Endothelial cell of umbilical vein (primary cell): ENCODE measurements at regions of chr5 and their contacts with region 1.

Region 1: DNA sequence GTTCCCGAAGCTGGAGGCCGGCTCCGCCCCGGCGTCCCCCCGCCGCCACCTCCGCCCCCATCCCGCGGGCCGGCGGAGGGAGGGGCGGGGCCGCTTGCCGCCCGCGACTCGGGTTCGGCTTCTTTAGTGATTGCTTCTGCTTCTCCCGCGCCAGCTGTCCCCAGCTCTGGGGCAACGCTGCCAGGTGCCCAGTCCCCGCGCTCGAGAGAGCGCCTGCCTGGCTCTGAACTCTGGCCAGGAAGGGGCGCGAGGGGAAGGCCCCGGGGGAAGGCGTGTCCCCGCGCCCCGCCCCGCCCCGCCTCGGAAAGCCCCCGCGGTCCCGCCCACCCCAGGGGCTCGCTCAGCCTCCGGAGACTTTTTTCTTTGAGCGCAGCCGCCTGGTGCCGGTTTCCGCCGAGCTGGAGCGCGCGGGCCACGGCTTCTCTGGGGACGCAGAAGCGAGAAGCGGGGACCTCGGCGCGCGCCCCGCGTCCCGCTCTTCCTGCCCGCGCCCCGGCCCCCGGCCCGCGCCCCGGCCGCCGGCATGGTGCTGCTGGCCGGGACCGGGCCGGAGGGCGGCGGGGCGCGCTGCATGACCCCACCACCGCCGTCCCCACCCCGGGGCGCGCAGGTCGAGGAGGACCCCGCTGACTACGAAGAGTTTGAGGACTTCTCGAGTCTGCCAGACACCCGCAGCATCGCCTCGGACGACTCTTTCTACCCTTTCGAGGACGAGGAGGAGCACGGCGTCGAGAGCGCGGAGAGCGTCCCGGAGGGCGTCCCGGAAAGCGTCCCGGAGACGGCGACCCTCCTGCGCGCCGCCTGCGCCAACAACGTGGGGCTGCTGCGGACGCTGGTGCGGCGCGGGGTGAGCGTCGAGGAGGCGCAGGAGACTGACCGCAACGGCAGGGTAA is at the start of gene ANKRD33B:
- DNase-seq: peak; percentile 72
- H3K4me3 ChIP-seq: peak within 1 kb of the TSS; percentile 51 to 62 (median 51)
- H3K27ac ChIP-seq: peak within 1 kb of the TSS; percentile 79
- H3K4me1 ChIP-seq: peaks cover 18% of the 10 kb centered on the region
- H3K27me3 ChIP-seq: no peaks in the 10 kb centered on the region
- CTCF ChIP-seq: no peak
- POLR2A ChIP-seq: peak; percentile 70
- total RNA-seq, gene ANKRD33B: 4.4 and 5.4 TPM in 2 replicates

Region 2: DNA sequence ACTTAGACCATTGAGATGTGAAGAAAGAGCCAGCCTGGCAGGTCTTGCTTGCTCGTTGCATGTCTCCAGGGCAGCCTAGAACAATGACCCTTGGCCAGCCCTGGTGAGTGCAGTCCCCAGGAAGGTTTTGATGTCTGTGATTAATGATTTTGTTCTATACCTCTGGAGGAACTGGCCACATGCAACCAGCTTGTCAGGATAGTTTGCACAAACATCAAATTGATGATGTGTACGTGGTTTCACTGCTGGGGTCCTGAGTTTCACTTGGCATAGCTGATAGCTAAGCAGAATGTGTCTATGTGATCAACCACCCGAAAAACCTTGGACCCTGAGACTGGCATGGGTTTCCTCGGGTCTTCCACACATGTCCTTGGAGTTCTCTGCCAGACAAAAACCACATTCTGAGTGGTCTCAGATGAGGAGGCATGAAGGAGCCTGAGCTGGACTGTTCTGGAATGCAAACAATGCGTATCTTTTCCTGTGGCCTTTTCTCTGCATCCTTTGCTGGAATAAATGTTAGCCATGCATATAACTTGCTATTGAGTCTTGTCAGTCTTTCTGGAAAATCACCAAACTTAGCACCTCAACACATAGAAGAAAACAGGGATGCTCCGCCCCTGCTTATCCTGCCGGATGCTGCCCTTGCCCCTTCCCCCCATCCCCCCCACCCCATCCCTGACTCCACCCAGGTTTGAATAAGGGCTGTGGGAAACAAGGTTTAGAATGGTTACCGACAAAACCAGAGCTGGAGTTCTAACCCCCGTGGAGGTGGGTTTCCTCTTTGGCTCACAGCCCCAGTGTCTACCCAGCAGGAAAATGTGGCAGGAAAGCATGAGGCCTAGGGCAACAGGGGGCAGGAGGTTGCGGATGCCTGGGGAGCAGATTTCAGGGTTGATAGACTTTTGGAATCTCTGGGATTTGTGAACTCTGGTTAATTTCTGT is 50.4 kb before region 1 on chr5:
- CTCF ChIA-PET with region 1: no interaction called
- POLR2A ChIA-PET with region 1: no interaction called
- dilution Hi-C with region 1: no loop called
- intact Hi-C with region 1: loop called (anchors 1 kb)
- DNase-seq: peak; percentile 96
- H3K4me3 ChIP-seq: no peak overlapping the region
- H3K27ac ChIP-seq: peak overlapping the region; percentile 85
- H3K4me1 ChIP-seq: peaks cover 20% of the 10 kb centered on the region
- H3K27me3 ChIP-seq: no peaks in the 10 kb centered on the region
- CTCF ChIP-seq: no peak
- POLR2A ChIP-seq: peak; percentile 58

Region 3: GRCh38 chr5:10552183-10553143 is 11.7 kb before region 1 on chr5:
- CTCF ChIA-PET with region 1: interaction called, 8 read pairs
- POLR2A ChIA-PET with region 1: interaction called, 3 read pairs
- dilution Hi-C with region 1: no loop called
- intact Hi-C with region 1: loop called (anchors 1 kb)
- DNase-seq: peak; percentile 44
- H3K4me3 ChIP-seq: no peak overlapping the region
- H3K27ac ChIP-seq: peak overlapping the region; percentile 87
- H3K4me1 ChIP-seq: peaks cover 33% of the 10 kb centered on the region
- H3K27me3 ChIP-seq: no peaks in the 10 kb centered on the region
- CTCF ChIP-seq: no peak
- POLR2A ChIP-seq: no peak

Region 4: DNA sequence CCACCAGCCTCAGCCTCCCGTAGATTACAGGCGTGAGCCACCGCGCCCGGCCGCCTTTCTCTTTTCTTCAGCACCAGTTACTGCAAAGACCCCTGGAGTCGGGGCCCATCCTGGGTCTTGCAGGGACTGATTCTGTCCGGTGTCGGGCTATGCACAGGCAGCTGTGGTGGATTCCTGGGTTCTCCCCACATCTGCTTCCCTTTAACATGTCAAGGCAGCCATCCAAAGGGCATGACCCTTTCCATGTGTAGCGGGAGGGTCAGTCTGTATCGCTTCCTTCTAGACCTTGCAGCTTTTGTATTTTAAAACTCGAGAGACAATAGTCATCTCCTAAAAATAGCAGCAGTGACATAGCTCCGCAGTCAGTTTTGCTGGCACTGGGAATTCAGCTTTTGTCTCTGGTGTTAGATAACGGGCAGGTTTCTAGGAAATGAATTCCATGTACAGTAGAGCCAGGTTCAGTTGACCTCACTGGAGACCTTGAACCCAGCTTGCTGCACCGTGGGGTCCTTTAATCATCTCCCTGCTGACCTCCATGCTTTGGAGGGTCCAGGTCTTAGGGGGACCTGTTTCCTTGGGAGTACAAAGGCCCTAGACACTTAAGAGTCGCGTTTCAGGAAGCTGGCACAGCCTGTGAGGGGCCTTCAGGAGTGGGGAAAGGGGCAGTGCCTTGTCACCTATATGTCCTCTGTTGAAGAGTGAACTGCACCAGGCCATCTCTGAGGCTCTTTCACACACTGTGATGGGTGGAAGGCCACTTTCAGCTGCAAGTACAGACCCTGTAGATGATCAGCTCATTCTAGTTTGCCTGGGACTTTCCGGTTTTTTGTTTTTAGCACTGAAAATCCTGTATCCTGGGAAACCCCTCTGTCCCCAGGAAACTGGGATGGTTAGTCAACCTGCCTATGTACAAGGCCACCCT is 13.4 kb after region 1 on chr5:
- CTCF ChIA-PET with region 1: interaction called, 8 read pairs
- POLR2A ChIA-PET with region 1: interaction called, 3 read pairs
- dilution Hi-C with region 1: no loop called
- intact Hi-C with region 1: loop called (anchors 1 kb)
- DNase-seq: peak; percentile 86
- H3K4me3 ChIP-seq: no peak overlapping the region
- H3K27ac ChIP-seq: peak overlapping the region; percentile 32
- H3K4me1 ChIP-seq: peaks cover 12% of the 10 kb centered on the region
- H3K27me3 ChIP-seq: no peaks in the 10 kb centered on the region
- CTCF ChIP-seq: no peak
- POLR2A ChIP-seq: peak; percentile 28

Region 5: DNA sequence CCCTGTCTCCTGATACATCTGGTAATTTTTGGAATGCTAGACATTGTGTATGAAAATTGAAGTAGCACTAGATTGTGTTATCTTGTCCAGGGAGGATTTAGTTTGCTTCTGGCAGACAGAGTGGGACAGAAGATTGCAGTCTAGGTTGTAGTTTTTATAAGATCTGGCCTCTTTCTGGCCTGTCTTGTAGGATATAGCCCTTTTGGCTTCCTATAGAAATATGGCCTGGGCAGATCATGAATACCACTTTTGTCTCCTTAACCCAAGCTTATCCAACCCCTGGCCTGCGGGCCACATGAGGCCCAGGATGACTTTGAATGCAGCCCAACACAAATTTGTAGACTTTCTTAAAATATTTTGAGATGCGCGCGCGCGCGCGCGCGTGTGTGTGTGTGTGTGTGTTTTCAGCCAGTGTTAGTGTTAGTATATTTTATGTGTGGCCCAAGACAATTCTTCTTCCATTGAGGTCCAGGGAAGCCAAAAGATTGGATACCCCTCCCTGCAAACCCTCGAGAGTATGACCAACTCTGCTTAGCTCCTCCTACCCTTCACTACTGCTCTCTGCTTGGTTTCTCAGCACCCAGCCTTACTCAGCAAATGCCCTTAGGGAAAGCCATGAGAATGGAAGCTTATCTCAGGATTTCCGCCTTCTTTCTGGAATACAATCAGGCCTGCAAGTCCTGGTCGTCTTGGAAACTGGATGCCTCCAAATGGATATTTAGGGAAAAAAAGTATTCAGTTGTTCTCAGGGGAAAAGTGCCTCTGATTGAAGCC is 26.2 kb after region 1 on chr5:
- CTCF ChIA-PET with region 1: interaction called, 4 read pairs
- POLR2A ChIA-PET with region 1: no interaction called
- dilution Hi-C with region 1: no loop called
- intact Hi-C with region 1: loop called (anchors 1 kb)
- DNase-seq: peak; percentile 97
- H3K4me3 ChIP-seq: no peak overlapping the region
- H3K27ac ChIP-seq: peak overlapping the region; percentile 49
- H3K4me1 ChIP-seq: peaks cover 27% of the 10 kb centered on the region
- H3K27me3 ChIP-seq: no peaks in the 10 kb centered on the region
- CTCF ChIP-seq: no peak
- POLR2A ChIP-seq: no peak

Region 6: GRCh38 chr5:10595678-10596309 is 31.6 kb after region 1 on chr5:
- CTCF ChIA-PET with region 1: interaction called, 4 read pairs
- POLR2A ChIA-PET with region 1: no interaction called
- dilution Hi-C with region 1: no loop called
- intact Hi-C with region 1: loop called (anchors 1 kb)
- DNase-seq: peak; percentile 93
- H3K4me3 ChIP-seq: peak overlapping the region in 1 of 3 experiments; percentile 63
- H3K27ac ChIP-seq: peak overlapping the region; percentile 87
- H3K4me1 ChIP-seq: peaks cover 28% of the 10 kb centered on the region
- H3K27me3 ChIP-seq: no peaks in the 10 kb centered on the region
- CTCF ChIP-seq: no peak
- POLR2A ChIP-seq: no peak

Region 7: DNA sequence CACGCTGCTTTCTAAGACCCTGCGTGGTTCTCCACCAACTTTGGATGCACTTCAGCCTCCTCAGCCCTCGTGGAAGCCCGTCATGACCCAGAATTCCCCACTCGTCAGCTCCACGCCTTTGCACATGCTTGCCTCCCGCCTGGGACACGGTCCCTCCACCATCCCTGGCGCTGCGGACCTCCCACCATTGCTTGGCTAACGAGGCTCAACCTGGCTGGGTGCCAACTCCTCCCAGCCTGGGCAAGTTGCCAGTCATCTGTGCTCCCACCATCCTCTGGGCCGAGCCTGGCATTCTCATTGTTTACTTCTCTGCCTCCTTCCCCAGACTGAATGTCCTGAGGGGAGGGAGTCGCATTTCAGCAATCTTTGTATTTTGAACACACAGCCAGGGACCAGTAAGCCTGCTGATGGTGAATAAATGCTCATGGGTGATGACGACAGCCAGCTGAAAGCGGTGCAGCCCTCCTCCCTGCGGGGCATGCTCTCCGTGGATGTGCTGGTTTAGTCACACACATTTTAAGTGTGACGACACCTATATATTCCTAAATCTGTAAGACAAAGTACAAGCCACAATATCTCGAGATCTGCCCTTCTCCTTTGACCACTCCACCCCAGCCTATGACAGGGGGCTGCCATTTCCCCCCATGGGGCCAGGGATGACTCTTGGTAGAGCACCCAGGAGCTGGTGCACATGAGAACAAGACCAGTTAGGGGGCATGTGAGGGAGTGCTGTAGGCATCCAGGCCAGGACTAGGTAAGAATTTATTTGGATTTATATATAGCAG is 37.2 kb after region 1 on chr5:
- CTCF ChIA-PET with region 1: no interaction called
- POLR2A ChIA-PET with region 1: no interaction called
- dilution Hi-C with region 1: no loop called
- intact Hi-C with region 1: loop called (anchors 1 kb)
- DNase-seq: peak; percentile 97
- H3K4me3 ChIP-seq: no peak overlapping the region
- H3K27ac ChIP-seq: peak overlapping the region; percentile 39
- H3K4me1 ChIP-seq: peaks cover 11% of the 10 kb centered on the region
- H3K27me3 ChIP-seq: no peaks in the 10 kb centered on the region
- CTCF ChIP-seq: no peak
- POLR2A ChIP-seq: no peak

Region 8: GRCh38 chr5:10649666-10650380 is 85.6 kb after region 1 on chr5:
- CTCF ChIA-PET with region 1: no interaction called
- POLR2A ChIA-PET with region 1: no interaction called
- dilution Hi-C with region 1: no loop called
- intact Hi-C with region 1: no loop called
- DNase-seq: no peak
- H3K4me3 ChIP-seq: no peak overlapping the region
- H3K27ac ChIP-seq: no peak overlapping the region
- H3K4me1 ChIP-seq: peaks cover 3% of the 10 kb centered on the region
- H3K27me3 ChIP-seq: no peaks in the 10 kb centered on the region
- CTCF ChIP-seq: no peak
- POLR2A ChIP-seq: no peak

Region 9: DNA sequence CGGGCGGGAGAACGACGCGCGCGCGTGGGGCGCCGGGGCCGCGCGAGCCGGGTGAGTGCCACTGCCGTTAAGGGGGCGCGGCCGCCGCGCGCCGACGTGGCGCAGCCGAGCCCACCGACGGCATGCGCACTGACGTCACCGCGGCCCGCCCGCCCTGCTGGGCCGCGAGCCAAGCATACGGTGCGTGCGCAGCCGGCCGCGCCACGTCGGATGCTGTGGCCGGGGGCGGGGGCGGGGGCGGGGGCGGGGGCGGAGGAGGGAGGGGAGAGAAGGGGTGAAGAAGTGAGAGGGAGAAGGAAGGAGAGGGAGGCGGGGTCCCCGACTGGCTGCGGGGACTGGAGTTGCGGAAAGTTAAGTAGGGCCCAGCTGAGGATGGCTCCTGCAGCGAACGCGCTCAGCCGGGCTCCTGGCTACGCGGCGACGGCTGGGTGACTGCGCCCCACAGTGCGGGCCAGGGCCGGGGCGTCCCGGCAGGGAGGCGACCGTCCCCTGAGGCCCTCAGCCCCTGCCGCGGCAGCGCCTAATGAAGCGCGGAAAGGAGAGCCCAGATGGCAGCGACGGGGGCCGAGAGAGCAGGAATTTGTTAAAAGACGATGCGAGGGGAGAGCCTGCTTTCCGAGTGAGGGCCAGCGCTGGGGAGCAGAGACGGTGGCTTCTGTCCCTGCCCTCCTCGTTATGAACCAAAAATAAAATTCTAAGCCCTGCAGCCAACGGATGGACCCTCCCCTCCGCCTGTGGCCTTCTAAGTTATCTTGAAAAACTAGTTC is 197.2 kb after region 1 on chr5 and contains the start of gene DAP:
- CTCF ChIA-PET with region 1: no interaction called
- POLR2A ChIA-PET with region 1: no interaction called
- dilution Hi-C with region 1: no loop called
- intact Hi-C with region 1: no loop called
- DNase-seq: peak; percentile 85
- H3K4me3 ChIP-seq: peak within 1 kb of the TSS; percentile 62 to 95 (median 84)
- H3K27ac ChIP-seq: peak within 1 kb of the TSS; percentile 81
- H3K4me1 ChIP-seq: peaks cover 24% of the 10 kb centered on the region
- H3K27me3 ChIP-seq: no peaks in the 10 kb centered on the region
- CTCF ChIP-seq: no peak
- POLR2A ChIP-seq: peak; percentile 59
- total RNA-seq, gene DAP: 173 and 188 TPM in 2 replicates